ENCODE measurements at regions of chr5 and their contacts with region 1.

Region 1: DNA sequence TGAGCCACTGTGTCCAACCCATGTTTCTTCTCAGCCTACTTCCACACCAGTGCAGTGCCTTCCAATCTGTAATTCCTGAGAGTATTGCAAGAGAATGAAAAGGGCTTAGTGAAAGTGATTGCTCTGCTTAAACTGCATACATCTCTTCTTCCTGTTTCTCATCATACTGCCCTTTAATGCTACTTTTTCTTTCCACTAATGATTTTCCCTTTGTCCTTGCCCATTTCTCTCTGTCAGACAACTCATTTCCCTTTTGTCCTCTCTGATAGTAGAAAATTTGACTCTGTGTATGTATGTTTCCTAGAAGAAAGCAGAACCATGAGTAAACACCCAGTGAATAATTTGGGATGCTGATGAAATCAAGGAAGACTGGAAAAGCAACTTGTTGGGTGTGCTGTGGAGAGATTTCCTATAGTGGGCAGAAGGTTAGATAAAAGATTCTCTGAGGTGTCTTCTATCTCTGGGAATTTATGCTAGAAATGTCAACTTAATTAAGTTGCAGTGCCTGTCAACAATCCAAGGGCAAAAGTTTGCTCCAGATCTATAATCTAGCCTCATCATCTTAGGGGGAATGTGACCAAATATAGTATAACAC is 102.2 kb upstream of the CHD1 start:
- DNase-seq: no peak
- H3K4me3 ChIP-seq: no peak overlapping the region
- H3K27ac ChIP-seq: no peak overlapping the region
- H3K4me1 ChIP-seq: peaks cover 0 to 5% (median 0%) of the 10 kb centered on the region in 4 donors
- H3K27me3 ChIP-seq: no peaks in the 10 kb centered on the region
- CTCF ChIP-seq: no peak

Region 2: GRCh38 chr5:98905857-98906690 is 124.9 kb before region 1 on chr5:
- intact Hi-C with region 1: loop called (anchors 2 kb)
- DNase-seq: no peak
- H3K4me3 ChIP-seq: no peak overlapping the region
- H3K27ac ChIP-seq: no peak overlapping the region
- H3K4me1 ChIP-seq: peaks cover 0 to 14% (median 0%) of the 10 kb centered on the region in 4 donors
- H3K27me3 ChIP-seq: no peaks in the 10 kb centered on the region
- CTCF ChIP-seq: peak; percentile 72 to 76

Region 3: DNA sequence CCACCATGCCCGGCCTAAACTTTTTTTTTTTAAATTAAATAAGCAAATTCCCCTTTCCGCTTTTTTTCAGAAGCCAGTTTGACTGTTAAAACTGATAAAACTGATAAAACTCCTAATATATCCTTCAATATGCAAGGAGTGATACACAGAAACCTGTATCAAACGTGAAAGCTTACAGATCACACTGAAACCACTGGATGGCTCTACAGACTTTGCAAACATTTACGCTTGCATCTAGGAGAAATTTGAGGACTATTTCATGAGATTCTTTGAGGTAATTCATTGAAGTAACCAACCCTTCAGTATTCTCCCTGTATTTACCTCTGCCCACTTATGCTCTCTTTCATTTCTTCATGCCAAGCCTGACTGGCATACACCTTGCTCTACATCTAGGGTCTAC is 61.6 kb before region 1 on chr5:
- intact Hi-C with region 1: no loop called
- DNase-seq: no peak
- H3K4me3 ChIP-seq: no peak overlapping the region
- H3K27ac ChIP-seq: no peak overlapping the region
- H3K4me1 ChIP-seq: no peaks in the 10 kb centered on the region
- H3K27me3 ChIP-seq: no peaks in the 10 kb centered on the region
- CTCF ChIP-seq: no peak

Measured in tibial artery (tissue), 4 donors.